HepG2 (cell line): ENCODE measurements at regions of chr14 and their contacts with region 1.

Region 1: DNA sequence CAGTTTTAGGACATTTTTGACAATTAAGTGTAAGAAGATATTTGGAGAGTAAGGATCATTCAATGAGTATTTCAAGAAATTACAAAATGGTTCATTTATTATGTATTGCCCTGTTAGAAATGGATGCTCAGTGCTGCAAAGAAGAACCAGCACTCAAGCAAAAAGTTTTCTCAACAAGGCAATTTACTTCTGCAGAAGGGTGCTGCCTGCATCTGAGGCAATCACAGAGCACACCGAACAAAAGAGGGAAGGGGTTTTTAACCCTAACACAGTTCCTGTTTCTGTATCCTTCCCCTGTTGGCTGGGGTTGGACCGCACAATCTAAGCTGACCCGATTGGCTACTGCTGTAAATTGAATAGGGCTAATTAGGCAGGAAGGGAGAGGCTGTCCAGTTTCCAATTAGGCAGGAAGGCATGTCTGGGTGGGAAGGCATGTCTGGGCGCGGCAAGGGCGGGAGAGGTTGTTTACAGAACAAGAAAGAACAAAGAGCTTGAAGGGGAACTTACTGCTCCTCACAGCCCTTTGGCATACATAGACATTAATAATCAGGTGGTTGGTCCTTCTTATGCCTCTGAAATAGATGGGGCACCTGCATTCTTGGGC is 41.4 kb downstream of the SPTSSA start:
- DNase-seq: no peak
- ATAC-seq: no peak
- H3K4me3 ChIP-seq: no peak overlapping the region
- H3K27ac ChIP-seq: no peak overlapping the region
- H3K4me1 ChIP-seq: peaks cover 6% of the 10 kb centered on the region; the same call in 1 of the 2 replicates
- H3K27me3 ChIP-seq: peaks cover 0 to 12% of the 10 kb centered on the region in 2 experiments; a peak in 2 of 5 replicates
- CTCF ChIP-seq: no peak
- EP300 ChIP-seq: no peak
- POLR2A ChIP-seq: no peak
- RAD21 ChIP-seq: no peak

Region 2: DNA sequence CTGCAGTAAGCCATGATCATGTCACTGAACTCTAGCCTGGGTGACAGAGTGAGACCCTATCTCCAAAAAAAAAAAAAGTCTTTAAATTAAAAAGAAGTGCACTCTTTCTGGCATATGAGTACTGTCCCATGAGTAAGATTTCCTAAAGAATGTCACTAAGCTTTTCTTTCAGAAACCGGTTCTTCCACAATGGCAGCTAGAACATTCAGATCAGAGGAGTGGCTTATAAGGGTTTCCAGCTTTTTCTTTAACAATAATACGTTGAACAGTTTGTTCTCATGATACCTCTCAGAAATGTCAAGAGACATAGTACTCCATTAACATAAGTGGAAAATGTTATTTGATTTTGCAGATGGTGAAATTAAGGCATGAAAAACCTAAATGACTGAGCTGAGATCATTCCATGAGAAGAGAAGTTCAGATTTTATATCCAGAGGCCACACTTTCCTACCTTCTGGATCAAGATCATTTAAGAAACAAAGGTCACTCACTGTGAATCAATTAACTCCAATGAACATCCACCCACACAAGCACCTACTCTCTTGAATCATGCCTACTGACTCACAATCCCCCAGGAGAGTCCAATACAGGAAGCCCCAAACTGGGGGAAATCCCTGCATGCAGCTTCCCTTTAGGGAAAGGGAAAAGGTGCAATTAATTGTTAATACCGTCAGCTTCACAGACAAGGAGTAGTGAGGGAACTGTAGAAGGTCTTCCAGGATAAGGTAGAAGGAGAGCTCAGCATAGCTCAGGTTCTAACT is 45.5 kb before region 1 on chr14:
- CTCF ChIA-PET with region 1: no interaction called
- POLR2A ChIA-PET with region 1: no interaction called
- in situ Hi-C with region 1: no loop called
- intact Hi-C with region 1: loop called (anchors 5 kb)
- DNase-seq: no peak
- ATAC-seq: no peak
- H3K4me3 ChIP-seq: no peak overlapping the region
- H3K27ac ChIP-seq: no peak overlapping the region
- H3K4me1 ChIP-seq: peaks cover 28% of the 10 kb centered on the region
- H3K27me3 ChIP-seq: no peaks in the 10 kb centered on the region; a peak in 1 of 5 replicates
- CTCF ChIP-seq: no peak
- EP300 ChIP-seq: no peak
- POLR2A ChIP-seq: no peak
- RAD21 ChIP-seq: no peak

Region 3: GRCh38 chr14:34403643-34404042 is 17.0 kb before region 1 on chr14:
- CTCF ChIA-PET with region 1: no interaction called
- POLR2A ChIA-PET with region 1: no interaction called
- in situ Hi-C with region 1: no loop called
- intact Hi-C with region 1: no loop called
- DNase-seq: no peak
- ATAC-seq: no peak
- H3K4me3 ChIP-seq: no peak overlapping the region
- H3K27ac ChIP-seq: no peak overlapping the region
- H3K4me1 ChIP-seq: no peaks in the 10 kb centered on the region
- H3K27me3 ChIP-seq: no peaks in the 10 kb centered on the region
- CTCF ChIP-seq: no peak
- EP300 ChIP-seq: no peak
- POLR2A ChIP-seq: no peak
- RAD21 ChIP-seq: no peak